ENCODE measurements at regions of chrX and their contacts with region 1.

Region 1: DNA sequence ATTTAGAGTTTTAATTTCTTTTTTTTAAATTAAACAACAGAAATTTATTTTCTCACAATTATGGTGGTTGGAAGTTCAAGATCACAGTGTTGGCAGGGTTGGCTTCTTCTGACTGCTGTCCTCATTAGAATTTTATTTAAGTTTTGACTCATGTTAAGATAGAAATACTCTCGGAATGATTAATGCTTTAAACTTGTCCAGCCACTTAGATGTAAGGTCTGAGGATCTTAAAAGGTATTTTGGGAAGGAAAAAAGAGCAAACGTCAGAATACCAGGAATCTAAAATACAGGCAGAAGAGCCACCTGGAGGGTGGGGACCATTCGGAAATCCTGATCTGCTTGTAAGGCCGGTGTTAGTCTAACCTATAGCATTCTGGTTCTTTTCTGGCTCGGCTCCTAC is 423.0 kb upstream of the MAGEB2 start:
- DNase-seq: no peak

Region 2: GRCh38 chrX:29762006-29762405 is 30.3 kb before region 1 on chrX:
- intact Hi-C with region 1: no loop called
- DNase-seq: no peak

Region 3: GRCh38 chrX:29775890-29776289 is 16.4 kb before region 1 on chrX:
- intact Hi-C with region 1: loop called in 1 of 2 experiments (anchors 1 kb)
- DNase-seq: no peak